ENCODE measurements at regions of chr11 and their contacts with region 1.

Region 1: GRCh38 chr11:122877732-122878131 is 4.8 kb upstream of the JHY start:
- DNase-seq: no peak
- H3K4me3 ChIP-seq: no peak overlapping the region
- H3K4me3 Mint-ChIP-seq: peak overlapping the region in 6 of 8 donors; percentile 9 to 73 (median 38)
- H3K27ac ChIP-seq: no peak overlapping the region
- H3K27ac Mint-ChIP-seq: peak overlapping the region in 1 of 7 donors; percentile 32
- H3K4me1 ChIP-seq: peaks cover 7% of the 10 kb centered on the region
- H3K4me1 Mint-ChIP-seq: peaks cover 6 to 14% (median 10%) of the 10 kb centered on the region in 4 donors
- H3K27me3 ChIP-seq: no peaks in the 10 kb centered on the region
- H3K27me3 Mint-ChIP-seq: no peaks in the 10 kb centered on the region

Region 2: GRCh38 chr11:122115524-122116379 is 762.0 kb before region 1 on chr11 and contains the start of gene BLID:
- CTCF ChIA-PET with region 1: no interaction called
- POLR2A ChIA-PET with region 1: no interaction called
- intact Hi-C with region 1: no loop called
- DNase-seq: no peak
- H3K4me3 ChIP-seq: no peak within 1 kb of the TSS
- H3K4me3 Mint-ChIP-seq: no peak within 1 kb of the TSS
- H3K27ac ChIP-seq: no peak within 1 kb of the TSS
- H3K27ac Mint-ChIP-seq: no peak within 1 kb of the TSS
- H3K4me1 ChIP-seq: no peaks in the 10 kb centered on the region
- H3K4me1 Mint-ChIP-seq: no peaks in the 10 kb centered on the region
- H3K27me3 ChIP-seq: no peaks in the 10 kb centered on the region
- H3K27me3 Mint-ChIP-seq: peaks cover 2 to 3% of the 10 kb centered on the region in 2 donors
- total RNA-seq, gene BLID: not detected

Region 3: DNA sequence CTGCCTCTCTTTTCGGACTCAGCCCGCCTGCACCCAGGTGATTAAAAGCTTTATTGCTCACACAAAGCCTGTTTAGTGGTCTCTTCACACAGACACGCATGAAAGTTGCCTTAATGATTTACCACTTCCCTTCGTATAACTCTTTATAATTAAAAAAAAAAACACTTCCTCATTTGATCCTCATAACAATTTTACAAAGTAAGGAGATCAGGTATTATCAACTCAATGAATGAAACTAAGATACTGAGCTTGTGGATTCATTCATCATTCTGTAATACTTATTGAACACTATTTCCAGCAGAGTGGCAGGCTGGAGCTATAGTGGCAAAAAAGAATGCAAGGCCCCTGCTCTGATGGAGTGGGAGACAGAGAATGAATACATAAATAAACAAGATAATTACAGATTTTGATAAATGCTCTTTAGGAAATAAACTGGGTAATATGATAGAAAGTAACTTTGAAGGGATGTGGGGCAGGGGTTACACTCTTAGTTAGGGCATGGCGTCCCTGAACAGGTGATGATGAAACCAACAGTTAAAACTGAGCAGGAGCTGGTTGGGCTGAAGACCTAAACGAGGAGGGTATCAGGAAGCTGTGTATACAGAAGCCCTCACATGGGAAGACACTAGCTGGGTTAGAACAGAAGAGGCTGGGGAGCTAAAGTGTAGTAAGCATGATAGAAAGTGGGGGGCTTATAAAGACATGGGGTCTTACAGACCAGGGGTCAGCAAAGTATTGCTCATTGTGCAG is 44.8 kb before region 1 on chr11:
- CTCF ChIA-PET with region 1: no interaction called
- POLR2A ChIA-PET with region 1: no interaction called
- intact Hi-C with region 1: no loop called
- DNase-seq: no peak
- H3K4me3 ChIP-seq: no peak overlapping the region
- H3K4me3 Mint-ChIP-seq: no peak overlapping the region
- H3K27ac ChIP-seq: no peak overlapping the region
- H3K27ac Mint-ChIP-seq: no peak overlapping the region
- H3K4me1 ChIP-seq: no peaks in the 10 kb centered on the region
- H3K4me1 Mint-ChIP-seq: peaks cover 0 to 2% (median 0%) of the 10 kb centered on the region in 4 donors
- H3K27me3 ChIP-seq: no peaks in the 10 kb centered on the region
- H3K27me3 Mint-ChIP-seq: peaks cover 8 to 11% of the 10 kb centered on the region in 2 donors

Region 4: DNA sequence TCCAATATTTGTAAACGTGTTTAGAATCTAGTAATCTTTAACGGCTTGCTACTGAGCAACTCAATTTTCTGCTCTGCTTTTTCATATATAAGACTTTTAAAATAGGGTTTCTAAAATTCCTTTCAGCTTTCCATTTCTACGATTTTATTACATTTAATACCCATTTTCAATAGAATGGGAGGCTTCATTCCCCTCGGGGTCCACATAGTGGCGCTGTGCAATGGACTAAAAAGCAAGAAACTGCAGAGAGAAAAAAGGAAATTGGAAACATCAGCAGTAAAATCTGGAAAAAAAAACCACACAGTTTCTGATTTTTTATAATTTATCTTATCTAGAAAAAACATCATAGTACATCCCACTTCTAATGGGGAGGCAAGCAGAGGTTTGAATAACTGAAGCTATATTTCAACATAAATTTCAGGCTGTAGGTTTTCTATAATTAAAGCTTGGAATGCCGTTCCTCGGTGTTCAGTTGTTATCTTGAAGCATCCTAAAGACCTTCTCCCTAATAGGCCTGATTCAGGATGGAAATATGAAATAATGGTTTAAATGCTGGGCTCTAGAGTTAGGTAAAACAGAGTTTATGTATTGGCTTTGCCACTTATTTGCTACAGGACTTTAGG is 13.9 kb before region 1 on chr11:
- CTCF ChIA-PET with region 1: interaction called, 11 read pairs
- POLR2A ChIA-PET with region 1: no interaction called
- intact Hi-C with region 1: no loop called
- DNase-seq: peak; percentile 24 to 49 (median 37)
- H3K4me3 ChIP-seq: no peak overlapping the region
- H3K4me3 Mint-ChIP-seq: no peak overlapping the region
- H3K27ac ChIP-seq: no peak overlapping the region
- H3K27ac Mint-ChIP-seq: no peak overlapping the region
- H3K4me1 ChIP-seq: no peaks in the 10 kb centered on the region
- H3K4me1 Mint-ChIP-seq: no peaks in the 10 kb centered on the region
- H3K27me3 ChIP-seq: no peaks in the 10 kb centered on the region
- H3K27me3 Mint-ChIP-seq: peaks cover 19 to 28% of the 10 kb centered on the region in 2 donors

Region 5: DNA sequence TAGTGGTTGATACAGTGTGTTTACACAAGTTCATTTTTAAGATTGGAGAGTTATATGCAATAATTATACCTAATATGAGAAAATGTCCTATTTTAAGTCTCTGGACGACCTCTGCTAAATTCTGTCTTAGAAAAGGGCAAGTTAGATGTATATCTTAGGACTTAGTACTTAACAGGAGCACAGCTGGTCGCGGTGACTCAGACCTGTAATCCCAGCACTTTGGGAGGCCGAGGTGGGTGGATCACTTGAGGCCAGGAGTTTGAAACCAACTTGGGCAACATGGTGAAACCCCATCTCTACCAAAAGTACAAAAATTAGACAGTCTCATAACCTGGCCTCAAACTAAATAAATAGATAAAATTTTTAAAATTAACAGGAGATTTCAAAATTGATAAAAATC is 76.7 kb after region 1 on chr11:
- CTCF ChIA-PET with region 1: no interaction called
- POLR2A ChIA-PET with region 1: no interaction called
- intact Hi-C with region 1: no loop called
- DNase-seq: no peak
- H3K4me3 ChIP-seq: no peak overlapping the region
- H3K4me3 Mint-ChIP-seq: no peak overlapping the region
- H3K27ac ChIP-seq: no peak overlapping the region
- H3K27ac Mint-ChIP-seq: no peak overlapping the region
- H3K4me1 ChIP-seq: peaks cover under 1% of the 10 kb centered on the region
- H3K4me1 Mint-ChIP-seq: no peaks in the 10 kb centered on the region
- H3K27me3 ChIP-seq: no peaks in the 10 kb centered on the region
- H3K27me3 Mint-ChIP-seq: no peaks in the 10 kb centered on the region

Region 6: GRCh38 chr11:123122341-123122740 is 244.6 kb after region 1 on chr11:
- CTCF ChIA-PET with region 1: no interaction called
- POLR2A ChIA-PET with region 1: no interaction called
- intact Hi-C with region 1: no loop called
- DNase-seq: no peak
- H3K4me3 ChIP-seq: no peak overlapping the region
- H3K4me3 Mint-ChIP-seq: no peak overlapping the region
- H3K27ac ChIP-seq: no peak overlapping the region
- H3K27ac Mint-ChIP-seq: no peak overlapping the region
- H3K4me1 ChIP-seq: no peaks in the 10 kb centered on the region
- H3K4me1 Mint-ChIP-seq: no peaks in the 10 kb centered on the region
- H3K27me3 ChIP-seq: no peaks in the 10 kb centered on the region
- H3K27me3 Mint-ChIP-seq: peaks cover 3 to 4% of the 10 kb centered on the region in 2 donors